ENCODE measurements at regions of chr11 and their contacts with region 1.

Region 1: DNA sequence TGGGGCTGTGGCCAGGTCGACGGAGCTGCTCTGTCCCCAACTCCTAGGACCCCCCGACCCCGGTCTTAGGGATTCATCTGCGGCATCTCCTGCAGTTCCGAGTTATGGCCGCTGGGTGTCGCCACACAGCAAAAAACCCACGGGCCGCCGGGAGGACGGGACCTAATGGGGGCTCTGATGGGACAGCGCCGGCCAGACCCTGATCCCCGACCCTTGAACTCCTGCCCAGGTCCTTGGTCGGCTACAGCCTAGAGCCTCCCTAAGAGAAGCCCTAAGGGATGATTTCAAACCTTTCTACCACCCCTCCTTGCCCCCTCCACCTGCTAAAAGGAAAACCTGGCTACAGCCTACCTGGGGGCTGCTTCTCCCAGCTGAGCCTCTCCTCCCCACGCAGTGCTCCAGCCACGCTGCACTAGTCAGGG is 30.8 kb upstream of the LRRC10B start:
- DNase-seq: peak; percentile 60
- H3K4me3 Mint-ChIP-seq: no peak overlapping the region
- H3K27ac Mint-ChIP-seq: no peak overlapping the region
- H3K4me1 Mint-ChIP-seq: peaks cover 21% of the 10 kb centered on the region
- H3K27me3 Mint-ChIP-seq: peaks cover under 1% of the 10 kb centered on the region
- CTCF ChIP-seq: peak; percentile 94

Region 2: DNA sequence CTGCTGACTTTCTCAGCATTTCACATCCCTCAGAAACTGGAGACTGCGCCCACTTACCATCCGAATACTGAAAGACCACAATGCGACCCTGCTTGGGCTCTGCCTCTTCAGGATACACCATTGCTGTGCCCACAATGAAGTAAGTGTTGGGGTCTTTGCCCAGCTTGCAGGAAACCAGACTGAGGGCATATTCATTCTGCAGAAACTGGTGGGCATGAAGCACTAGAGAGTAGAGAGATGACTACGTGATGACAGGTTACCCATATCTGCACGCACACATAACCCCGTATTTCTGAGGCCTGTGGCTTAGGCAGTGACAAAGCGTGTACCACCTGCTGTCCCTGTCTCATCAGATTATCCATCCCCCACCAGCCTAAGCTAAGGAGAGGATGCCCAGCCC is 168.0 kb before region 1 on chr11:
- CTCF ChIA-PET with region 1: no interaction called
- intact Hi-C with region 1: no loop called
- DNase-seq: no peak
- H3K4me3 Mint-ChIP-seq: no peak overlapping the region
- H3K27ac Mint-ChIP-seq: no peak overlapping the region
- H3K4me1 Mint-ChIP-seq: no peaks in the 10 kb centered on the region
- H3K27me3 Mint-ChIP-seq: no peaks in the 10 kb centered on the region
- CTCF ChIP-seq: no peak

Region 3: GRCh38 chr11:61413496-61413895 is 64.2 kb before region 1 on chr11:
- CTCF ChIA-PET with region 1: no interaction called
- intact Hi-C with region 1: no loop called
- DNase-seq: no peak
- H3K4me3 Mint-ChIP-seq: no peak overlapping the region
- H3K27ac Mint-ChIP-seq: no peak overlapping the region
- H3K4me1 Mint-ChIP-seq: no peaks in the 10 kb centered on the region
- H3K27me3 Mint-ChIP-seq: no peaks in the 10 kb centered on the region
- CTCF ChIP-seq: no peak

Region 4: GRCh38 chr11:61516675-61517572 is 39.2 kb after region 1 on chr11:
- CTCF ChIA-PET with region 1: interaction called, 10 read pairs
- intact Hi-C with region 1: loop called (anchors 1 kb)
- DNase-seq: peak; percentile 57
- H3K4me3 Mint-ChIP-seq: no peak overlapping the region
- H3K27ac Mint-ChIP-seq: no peak overlapping the region
- H3K4me1 Mint-ChIP-seq: peaks cover 21% of the 10 kb centered on the region
- H3K27me3 Mint-ChIP-seq: peaks cover 39% of the 10 kb centered on the region
- CTCF ChIP-seq: peak; percentile 98

Region 5: GRCh38 chr11:61541598-61541997 is 63.9 kb after region 1 on chr11:
- CTCF ChIA-PET with region 1: no interaction called
- intact Hi-C with region 1: no loop called
- DNase-seq: no peak
- H3K4me3 Mint-ChIP-seq: no peak overlapping the region
- H3K27ac Mint-ChIP-seq: no peak overlapping the region
- H3K4me1 Mint-ChIP-seq: peaks cover 17% of the 10 kb centered on the region
- H3K27me3 Mint-ChIP-seq: peaks cover 60% of the 10 kb centered on the region
- CTCF ChIP-seq: no peak

Region 6: GRCh38 chr11:61639816-61640443 is 162.2 kb after region 1 on chr11:
- CTCF ChIA-PET with region 1: interaction called, 11 read pairs
- intact Hi-C with region 1: no loop called
- DNase-seq: no peak
- H3K4me3 Mint-ChIP-seq: no peak overlapping the region
- H3K27ac Mint-ChIP-seq: no peak overlapping the region
- H3K4me1 Mint-ChIP-seq: no peaks in the 10 kb centered on the region
- H3K27me3 Mint-ChIP-seq: peaks cover 35% of the 10 kb centered on the region
- CTCF ChIP-seq: no peak

Measured in Calu3 (cell line).